A673 (cell line): ENCODE measurements at regions of chr2 and their contacts with region 1.

Region 1: DNA sequence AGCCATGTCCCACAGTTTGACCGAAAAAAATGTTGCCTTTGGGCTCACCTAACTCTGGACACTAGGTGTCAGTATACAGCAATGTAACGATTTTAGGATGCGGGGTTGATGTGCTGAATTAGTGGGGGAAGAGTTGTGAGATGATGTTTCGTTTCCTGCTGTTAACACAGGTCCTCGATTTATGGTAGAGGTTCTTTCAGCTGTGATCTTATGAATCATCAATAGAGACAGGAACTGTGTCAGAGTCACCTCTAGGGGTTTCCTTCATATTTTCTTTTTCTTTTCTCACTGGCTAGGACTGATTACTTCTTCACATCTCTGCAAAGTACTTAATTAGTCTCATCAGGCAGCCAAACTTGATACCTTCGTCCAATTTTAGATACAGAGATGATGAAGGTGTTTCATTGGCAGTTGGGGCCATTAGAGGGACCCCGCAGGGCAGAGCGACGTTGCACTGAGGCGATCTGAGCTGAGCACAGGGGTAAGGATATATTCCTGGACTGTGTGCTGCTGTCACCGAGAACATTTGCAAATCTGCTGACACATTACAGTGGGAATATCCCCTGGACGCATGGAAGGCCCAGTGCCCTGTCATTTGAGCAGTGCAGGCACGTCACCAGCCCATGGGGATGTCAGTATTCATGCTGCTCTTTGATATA is 10.2 kb upstream of the MMADHC start:
- DNase-seq: peak; percentile 84
- H3K4me3 ChIP-seq: no peak overlapping the region
- H3K27ac ChIP-seq: no peak overlapping the region
- H3K4me1 ChIP-seq: peaks cover 3% of the 10 kb centered on the region
- H3K27me3 ChIP-seq: no peaks in the 10 kb centered on the region
- CTCF ChIP-seq: peak; percentile 77

Region 2: DNA sequence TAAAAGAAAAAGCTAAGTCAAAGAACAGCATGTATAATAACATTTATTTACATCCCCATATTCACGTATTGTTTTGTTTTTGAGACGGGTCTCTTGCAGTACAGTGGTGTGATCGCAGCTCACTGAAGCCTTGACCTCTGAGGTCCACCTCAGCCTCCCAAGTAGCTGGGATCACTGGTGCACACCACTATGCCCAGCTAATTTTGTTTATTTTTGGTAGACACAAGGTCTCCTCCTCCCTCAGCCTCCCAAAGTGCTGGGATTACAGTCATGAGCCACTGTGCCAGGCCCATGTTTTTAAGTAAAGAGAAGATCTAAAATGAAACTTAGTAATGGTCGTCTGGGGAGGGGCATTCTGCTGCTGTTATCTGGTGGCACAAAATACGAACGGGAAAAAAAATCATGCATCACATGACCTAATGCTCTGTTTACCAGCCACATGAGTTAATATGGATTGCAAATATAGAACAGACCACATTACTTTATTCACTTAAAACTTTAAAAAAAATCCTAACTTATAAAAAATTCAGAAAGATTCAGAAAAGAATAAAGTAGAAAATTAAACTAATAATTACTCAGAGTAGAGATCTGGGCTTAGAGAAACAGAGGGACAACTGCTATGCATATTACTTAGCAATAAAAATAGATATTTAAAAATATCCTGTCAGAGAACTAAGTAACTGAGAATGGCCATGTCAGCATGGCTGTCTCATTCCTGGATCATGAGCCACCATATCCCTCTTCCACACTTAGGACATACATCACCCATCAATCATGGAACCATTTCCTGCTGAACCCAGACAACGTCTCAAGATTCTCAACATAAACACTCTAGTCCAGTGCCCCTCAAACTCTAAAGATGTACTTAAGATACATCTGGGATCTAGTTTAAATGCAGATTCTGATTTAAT is 17.6 kb before region 1 on chr2:
- CTCF ChIA-PET with region 1: no interaction called
- POLR2A ChIA-PET with region 1: no interaction called
- intact Hi-C with region 1: no loop called
- DNase-seq: no peak
- H3K4me3 ChIP-seq: no peak overlapping the region
- H3K27ac ChIP-seq: no peak overlapping the region
- H3K4me1 ChIP-seq: peaks cover 9% of the 10 kb centered on the region
- H3K27me3 ChIP-seq: no peaks in the 10 kb centered on the region
- CTCF ChIP-seq: no peak

Region 3: DNA sequence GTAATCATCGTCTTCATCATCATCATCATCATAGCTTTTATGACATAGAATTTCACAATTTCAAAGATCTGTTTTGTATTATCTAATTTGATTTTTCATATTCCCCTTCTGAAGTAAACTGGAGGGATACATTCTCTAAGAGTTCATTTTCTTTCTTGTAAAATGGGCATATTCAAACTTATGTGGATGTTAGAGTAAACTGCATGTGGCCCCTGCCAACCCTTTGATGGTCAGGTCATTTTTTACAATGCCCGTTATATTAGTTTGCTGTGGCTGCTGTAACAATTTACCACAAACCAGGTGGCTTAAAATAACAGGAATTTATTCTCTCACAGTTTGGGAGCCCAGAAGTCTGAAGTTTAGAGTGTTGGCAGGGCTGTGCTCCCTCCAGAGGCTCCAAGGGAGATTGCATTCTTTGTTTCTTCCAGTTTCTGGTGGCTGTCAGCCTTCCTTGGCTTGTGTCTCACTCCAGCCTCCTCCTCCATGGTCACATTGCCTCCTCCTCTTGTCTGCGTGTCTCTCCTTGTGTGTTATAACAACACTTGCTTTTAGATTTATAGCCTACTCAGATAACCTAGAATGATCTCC is 117.3 kb after region 1 on chr2:
- CTCF ChIA-PET with region 1: no interaction called
- POLR2A ChIA-PET with region 1: no interaction called
- intact Hi-C with region 1: loop called (anchors 2 kb)
- DNase-seq: peak; percentile 52
- H3K4me3 ChIP-seq: no peak overlapping the region
- H3K27ac ChIP-seq: no peak overlapping the region
- H3K4me1 ChIP-seq: no peaks in the 10 kb centered on the region
- H3K27me3 ChIP-seq: no peaks in the 10 kb centered on the region
- CTCF ChIP-seq: peak; percentile 70

Region 4: DNA sequence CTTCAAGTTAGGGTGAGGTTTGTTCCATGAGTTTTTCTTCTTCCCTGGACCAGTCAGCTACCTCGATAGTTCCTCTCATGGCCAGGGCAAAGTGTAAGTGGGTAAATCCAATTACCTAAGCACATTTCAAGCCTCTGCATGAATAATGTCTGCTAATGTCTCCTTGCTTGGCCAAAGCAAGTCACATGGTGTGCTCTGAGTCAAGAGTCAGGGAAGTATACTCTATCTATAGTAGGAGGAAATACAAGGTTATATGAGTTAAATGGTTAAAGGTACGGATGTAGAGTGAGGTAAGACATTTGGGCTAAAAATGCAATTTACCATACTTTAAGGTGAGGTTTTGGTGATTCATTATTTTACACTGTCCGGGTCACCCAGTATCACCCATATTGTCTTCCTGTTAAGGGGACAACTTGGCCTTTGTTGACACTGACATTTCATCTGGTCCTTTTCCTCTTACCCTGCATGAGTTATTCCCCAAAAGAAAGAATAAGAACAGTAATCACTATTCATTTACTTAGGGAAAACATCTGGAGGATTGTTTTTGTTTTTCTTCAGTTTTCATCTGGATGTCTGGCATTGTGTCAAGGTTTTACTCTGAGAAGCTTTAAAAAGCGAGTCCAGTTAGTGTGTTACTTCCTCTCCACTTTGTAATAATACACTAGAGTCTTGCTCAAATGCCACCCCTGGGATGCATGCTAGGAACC is 484.1 kb after region 1 on chr2:
- CTCF ChIA-PET with region 1: no interaction called
- POLR2A ChIA-PET with region 1: no interaction called
- intact Hi-C with region 1: no loop called
- DNase-seq: no peak
- H3K4me3 ChIP-seq: no peak overlapping the region
- H3K27ac ChIP-seq: no peak overlapping the region
- H3K4me1 ChIP-seq: peaks cover 3% of the 10 kb centered on the region
- H3K27me3 ChIP-seq: no peaks in the 10 kb centered on the region
- CTCF ChIP-seq: no peak

Region 5: DNA sequence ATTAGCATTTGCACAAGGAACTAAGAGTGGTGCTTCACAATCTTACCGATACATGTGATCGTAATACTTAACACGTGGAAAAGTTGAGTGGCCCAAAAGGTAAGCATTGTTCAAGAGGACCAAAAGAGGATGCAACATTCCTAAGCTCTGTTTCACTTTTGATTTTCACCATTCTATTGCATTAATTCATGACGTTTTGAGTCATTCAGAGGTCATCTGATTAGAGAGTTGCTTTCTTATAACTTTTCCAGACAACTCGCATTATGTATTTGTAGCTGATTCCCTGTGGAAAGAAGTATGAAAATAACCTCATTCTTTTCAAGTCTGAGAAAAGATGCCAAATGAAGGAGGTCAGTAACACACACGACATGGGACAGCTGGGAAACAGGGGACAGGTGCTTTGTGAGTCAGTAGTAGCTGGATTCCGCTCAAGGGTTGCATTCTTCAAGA is 545.3 kb after region 1 on chr2:
- CTCF ChIA-PET with region 1: no interaction called
- POLR2A ChIA-PET with region 1: no interaction called
- intact Hi-C with region 1: loop called (anchors 5 kb)
- DNase-seq: no peak
- H3K4me3 ChIP-seq: no peak overlapping the region
- H3K27ac ChIP-seq: no peak overlapping the region
- H3K4me1 ChIP-seq: peaks cover 16% of the 10 kb centered on the region
- H3K27me3 ChIP-seq: no peaks in the 10 kb centered on the region
- CTCF ChIP-seq: no peak

Region 6: DNA sequence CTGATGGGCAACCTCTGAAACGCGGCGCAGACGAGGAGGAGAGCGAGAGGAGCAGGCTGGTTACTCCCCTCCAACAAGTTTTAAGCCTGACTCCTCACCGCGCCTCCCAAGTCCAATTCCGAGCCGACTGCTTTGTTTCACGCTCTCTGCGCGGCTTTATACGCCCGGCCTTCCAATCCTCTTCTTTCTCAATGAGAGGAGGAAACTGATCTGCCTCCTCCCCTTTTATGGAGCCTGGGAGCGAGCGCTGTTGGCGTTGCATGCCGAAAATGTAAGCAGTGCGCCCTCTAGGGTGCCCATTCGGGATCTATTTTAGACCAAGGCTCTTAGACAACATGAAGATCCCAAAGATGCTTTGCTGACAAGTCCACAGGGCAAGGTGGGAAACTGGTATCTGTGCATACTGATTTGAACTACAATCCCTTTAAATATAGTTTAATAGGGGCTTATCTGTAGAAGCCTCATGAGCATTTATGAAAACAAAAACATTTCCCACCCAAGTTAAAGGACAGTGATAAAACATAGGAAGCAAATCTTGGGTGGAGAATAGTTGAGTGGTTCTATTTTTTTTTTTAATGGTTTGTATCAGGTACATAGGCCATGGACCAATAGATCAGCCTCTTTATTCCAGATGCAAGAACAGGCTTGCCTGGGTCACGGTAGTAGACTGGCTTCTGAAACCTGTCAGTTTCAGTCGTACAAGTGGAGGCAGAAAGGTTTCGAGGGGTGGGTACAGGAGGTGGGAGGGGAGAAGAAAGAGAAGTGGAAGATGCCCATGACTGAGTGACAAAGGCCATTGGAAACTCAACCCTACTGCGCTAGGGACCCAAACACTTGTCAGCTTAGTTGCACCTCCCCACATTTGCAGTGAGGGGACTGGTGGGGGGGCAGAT is 890.0 kb after region 1 on chr2 and contains the start of gene RND3:
- CTCF ChIA-PET with region 1: no interaction called
- POLR2A ChIA-PET with region 1: no interaction called
- intact Hi-C with region 1: loop called (anchors 1 kb)
- DNase-seq: peak; percentile 99
- H3K4me3 ChIP-seq: peak within 1 kb of the TSS; percentile 67
- H3K27ac ChIP-seq: peak within 1 kb of the TSS; percentile 61
- H3K4me1 ChIP-seq: peaks cover 9% of the 10 kb centered on the region
- H3K27me3 ChIP-seq: no peaks in the 10 kb centered on the region
- CTCF ChIP-seq: peak; percentile 92
- total RNA-seq, gene RND3: 10.2 and 15.0 TPM in 2 replicates

Region 7: DNA sequence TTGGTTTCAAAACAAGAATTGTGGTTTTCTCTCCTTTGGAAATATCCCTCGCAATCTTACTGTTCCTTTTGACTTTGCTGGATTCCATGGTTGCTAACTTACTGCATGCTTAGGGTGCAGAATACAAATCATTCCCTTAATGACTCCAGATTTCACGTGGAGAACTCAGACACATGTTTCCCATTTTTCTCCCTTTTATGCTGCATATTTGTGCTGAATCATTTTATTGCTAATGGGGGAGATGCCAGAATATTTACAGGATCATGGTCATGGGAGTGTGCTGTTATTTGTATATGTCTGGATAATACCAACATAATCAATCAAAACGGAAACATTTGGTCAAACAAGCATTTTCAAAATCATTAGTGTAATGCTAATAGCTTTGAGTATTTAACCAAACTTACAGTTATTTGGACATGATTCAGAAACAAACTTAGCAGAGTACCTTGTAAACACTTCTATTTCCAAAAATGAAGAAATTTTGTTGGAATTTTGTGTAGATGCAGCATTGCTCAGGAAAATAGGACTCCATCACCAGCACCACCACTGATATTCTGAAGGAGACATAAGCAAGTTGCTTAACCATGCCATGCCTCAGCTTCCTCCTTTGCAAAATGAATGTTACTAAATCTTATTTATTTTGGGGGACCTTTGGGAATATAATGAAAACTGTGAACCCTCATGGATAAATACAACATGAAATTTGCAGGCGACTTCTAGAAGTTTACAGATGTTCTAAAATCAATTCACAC is 1012.2 kb after region 1 on chr2:
- CTCF ChIA-PET with region 1: no interaction called
- POLR2A ChIA-PET with region 1: no interaction called
- intact Hi-C with region 1: loop called (anchors 5 kb)
- DNase-seq: no peak
- H3K4me3 ChIP-seq: no peak overlapping the region
- H3K27ac ChIP-seq: no peak overlapping the region
- H3K4me1 ChIP-seq: peaks cover 9% of the 10 kb centered on the region
- H3K27me3 ChIP-seq: no peaks in the 10 kb centered on the region
- CTCF ChIP-seq: no peak

Region 8: GRCh38 chr2:151051574-151052220 is 1453.9 kb after region 1 on chr2:
- CTCF ChIA-PET with region 1: interaction called, 5 read pairs
- POLR2A ChIA-PET with region 1: no interaction called
- intact Hi-C with region 1: loop called (anchors 5 kb)
- DNase-seq: peak; percentile 71
- H3K4me3 ChIP-seq: no peak overlapping the region
- H3K27ac ChIP-seq: no peak overlapping the region
- H3K4me1 ChIP-seq: no peaks in the 10 kb centered on the region
- H3K27me3 ChIP-seq: no peaks in the 10 kb centered on the region
- CTCF ChIP-seq: peak; percentile 92

Region 9: GRCh38 chr2:151238527-151239487 is 1641.0 kb after region 1 on chr2:
- CTCF ChIA-PET with region 1: interaction called, 5 read pairs
- POLR2A ChIA-PET with region 1: no interaction called
- intact Hi-C with region 1: loop called (anchors 2 kb)
- DNase-seq: peak; percentile 88
- H3K4me3 ChIP-seq: no peak overlapping the region
- H3K27ac ChIP-seq: no peak overlapping the region
- H3K4me1 ChIP-seq: peaks cover 6% of the 10 kb centered on the region
- H3K27me3 ChIP-seq: no peaks in the 10 kb centered on the region
- CTCF ChIP-seq: peak; percentile 88